ENCODE measurements at regions of chr1 and their contacts with region 1.

Region 1: DNA sequence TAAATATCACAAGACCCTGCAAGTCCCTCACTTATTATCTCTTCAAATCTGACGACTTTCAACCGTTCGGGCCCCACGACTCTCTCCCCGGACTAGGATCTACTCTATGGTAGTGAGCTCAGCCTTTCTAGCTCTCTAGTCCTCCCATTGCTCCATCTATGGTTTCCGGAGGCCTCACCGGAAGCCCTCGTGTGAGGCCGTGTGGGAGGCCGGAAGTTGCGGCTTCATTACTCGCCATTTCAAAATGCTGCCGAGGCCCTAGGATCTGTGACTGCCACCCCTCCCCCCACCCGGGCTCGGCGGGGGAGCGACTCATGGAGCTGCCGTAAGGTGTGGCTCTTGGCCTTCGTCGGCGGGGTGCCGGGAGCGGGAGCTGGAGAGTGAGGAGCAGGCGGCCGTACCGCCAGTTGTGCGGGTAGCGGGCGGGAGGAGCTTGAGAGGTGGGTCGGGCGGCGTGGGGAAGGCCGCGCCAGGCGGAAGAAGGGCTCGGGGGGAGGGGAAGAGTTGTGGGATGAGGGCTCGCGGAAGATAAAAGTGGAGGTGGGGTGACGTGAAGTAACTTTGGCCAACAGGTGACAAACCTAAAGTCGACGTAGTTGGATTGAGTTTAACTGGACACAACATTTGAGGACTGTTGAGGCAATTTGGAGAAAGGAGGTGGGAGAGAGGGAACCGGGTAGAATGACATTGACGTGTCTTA is at the start of gene MDM4:
- DNase-seq: peak; percentile 89
- CTCF ChIP-seq: no peak

Region 2: DNA sequence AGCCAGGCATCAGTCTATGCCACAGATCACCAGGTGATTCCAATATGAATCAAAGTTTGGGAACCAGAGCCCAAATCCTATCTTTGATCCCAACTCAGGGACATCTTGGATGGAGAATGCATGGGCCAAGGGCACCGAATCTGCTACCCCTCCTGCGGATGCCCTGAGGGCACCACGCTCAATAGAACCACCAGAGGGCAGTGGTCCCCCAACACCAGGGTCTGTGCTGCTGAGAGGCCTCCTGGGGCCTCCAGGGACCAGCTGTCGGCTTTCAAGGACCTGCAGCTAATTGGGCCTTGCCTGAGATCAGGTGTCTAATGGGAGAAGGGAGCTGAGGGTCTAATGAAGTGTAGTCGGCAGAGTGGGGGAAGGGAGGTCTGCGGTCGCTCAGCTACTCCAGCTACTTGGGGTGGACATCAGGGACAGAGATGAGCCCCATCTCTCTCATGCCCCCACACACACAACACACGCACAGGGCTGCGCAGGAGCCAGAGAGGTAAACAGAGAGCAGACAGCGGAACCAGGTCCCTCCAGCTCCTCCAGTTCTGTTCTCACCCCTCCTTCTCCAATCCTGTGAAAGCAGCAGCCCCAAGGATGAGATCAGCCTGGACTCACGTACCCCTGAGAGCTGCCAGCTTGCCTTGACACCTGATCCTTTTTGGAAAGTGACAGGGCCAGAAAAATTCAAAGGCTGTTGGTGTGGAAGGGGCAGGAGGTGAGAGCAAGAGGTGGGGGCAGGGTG is 69.8 kb before region 1 on chr1:
- CTCF ChIA-PET with region 1: interaction called, 11 read pairs
- POLR2A ChIA-PET with region 1: no interaction called
- DNase-seq: peak; percentile 88
- CTCF ChIP-seq: peak; percentile 83

Region 3: DNA sequence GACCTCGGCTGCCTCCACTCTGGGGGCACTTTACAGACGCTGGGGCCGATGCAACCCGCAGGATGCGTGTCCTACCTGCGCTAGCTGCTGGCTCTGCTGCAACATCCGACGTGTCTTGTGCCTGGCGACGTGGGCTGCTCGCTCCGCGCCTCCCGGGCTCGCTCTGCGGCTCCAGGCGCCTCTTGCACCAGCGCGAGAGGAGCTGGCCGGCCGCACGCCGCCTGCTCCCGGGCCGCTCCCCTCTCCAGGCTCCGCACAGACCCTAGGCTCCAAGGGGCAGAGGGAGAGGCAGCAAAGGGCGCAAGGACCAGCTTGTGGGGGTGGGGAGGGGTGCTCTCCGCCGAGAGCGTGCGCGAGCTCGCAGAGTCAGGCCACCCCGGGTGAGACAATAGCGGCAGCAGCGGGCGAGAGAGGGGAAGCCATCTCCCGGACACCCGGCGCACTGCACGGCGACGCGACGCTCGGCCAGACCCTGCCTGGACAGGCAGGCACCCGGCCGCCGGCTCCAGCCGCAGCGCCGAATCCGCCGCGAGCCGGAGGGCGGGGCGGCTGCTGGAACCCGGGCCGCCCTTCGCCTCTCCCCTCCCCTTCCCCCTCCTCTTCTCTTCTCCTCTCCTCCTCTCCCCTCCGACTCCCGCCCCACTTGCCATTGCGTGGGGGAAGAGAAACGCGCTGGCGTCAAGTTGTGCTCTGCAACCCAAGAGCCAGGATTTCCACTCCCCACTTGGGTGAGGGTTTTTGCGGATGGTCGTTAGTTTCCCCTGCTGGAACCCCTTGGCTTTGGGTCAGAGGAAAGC is 21.9 kb before region 1 on chr1 and contains the start of gene PIK3C2B:
- CTCF ChIA-PET with region 1: interaction called, 4 read pairs
- POLR2A ChIA-PET with region 1: interaction called, 10 read pairs
- DNase-seq: peak; percentile 90
- CTCF ChIP-seq: peak; percentile 47

Region 4: GRCh38 chr1:204530932-204531331 is 14.6 kb after region 1 on chr1:
- CTCF ChIA-PET with region 1: interaction called, 56 read pairs
- POLR2A ChIA-PET with region 1: interaction called, 26 read pairs
- DNase-seq: peak; percentile 70
- CTCF ChIP-seq: no peak

Measured in GM10248 (cell line).